ENCODE measurements at regions of chr16 and their contacts with region 1.

Region 1: GRCh38 chr16:12965274-12965804 is 63.9 kb downstream of the SHISA9 start:
- DNase-seq: no peak

Region 2: DNA sequence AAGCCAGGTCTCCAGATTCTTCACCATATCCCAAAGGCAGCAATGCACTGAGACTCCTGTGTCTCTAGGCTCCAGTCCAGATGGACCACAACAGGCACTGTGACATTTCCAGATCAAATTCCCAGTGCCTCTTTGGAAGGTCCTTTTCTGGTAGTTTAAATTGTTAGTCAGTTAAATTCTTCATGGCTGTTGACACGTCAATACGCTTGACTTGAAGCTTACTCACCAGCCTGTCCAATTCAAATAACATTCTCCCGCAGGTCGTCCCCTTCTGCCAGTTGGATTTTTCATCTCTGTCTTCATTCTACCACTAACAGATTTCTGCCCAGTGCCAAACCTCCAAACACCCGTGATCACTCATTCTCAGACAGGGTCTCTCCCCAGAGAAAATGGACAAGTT is 22.7 kb after region 1 on chr16:
- intact Hi-C with region 1: loop called in 1 of 2 experiments (anchors 1 kb)
- DNase-seq: no peak